ENCODE measurements at regions of chr6 and their contacts with region 1.

Region 1: GRCh38 chr6:137497721-137498463 is 3.7 kb upstream of the OLIG3 start:
- DNase-seq: peak in 3 of 35 experiments; percentile 13 to 19 (median 14)
- ATAC-seq: peak; percentile 47 to 64 (median 57)
- H3K4me3 ChIP-seq: peak overlapping the region; percentile 16 to 47
- H3K4me3 Mint-ChIP-seq: peak overlapping the region in 2 of 3 donors; percentile 44 to 60
- H3K27ac ChIP-seq: no peak overlapping the region
- H3K27ac Mint-ChIP-seq: peak overlapping the region in 1 of 2 donors; percentile 43
- H3K4me1 ChIP-seq: peaks cover 29 to 53% of the 10 kb centered on the region in 2 experiments
- H3K4me1 Mint-ChIP-seq: peaks cover 37 to 46% (median 41%) of the 10 kb centered on the region in 3 donors
- H3K27me3 ChIP-seq: peaks cover 40 to 58% of the 10 kb centered on the region in 2 experiments
- H3K27me3 Mint-ChIP-seq: peaks cover 65 to 75% of the 10 kb centered on the region in 2 donors

Region 2: GRCh38 chr6:137487181-137487868 is 10.6 kb before region 1 on chr6:
- CTCF ChIA-PET with region 1: interaction called in 1 of 2 experiments, 4 read pairs
- POLR2A ChIA-PET with region 1: interaction called in 1 of 2 experiments, 12 read pairs
- DNase-seq: no peak
- ATAC-seq: no peak
- H3K4me3 ChIP-seq: peak overlapping the region in 1 of 2 donors; percentile 5
- H3K4me3 Mint-ChIP-seq: peak overlapping the region in 1 of 3 donors; percentile 70
- H3K27ac ChIP-seq: no peak overlapping the region
- H3K27ac Mint-ChIP-seq: no peak overlapping the region
- H3K4me1 ChIP-seq: peaks cover 11 to 27% of the 10 kb centered on the region in 2 experiments
- H3K4me1 Mint-ChIP-seq: peaks cover 22 to 30% (median 30%) of the 10 kb centered on the region in 3 donors
- H3K27me3 ChIP-seq: peaks cover 46% of the 10 kb centered on the region in 2 experiments
- H3K27me3 Mint-ChIP-seq: peaks cover 68 to 77% of the 10 kb centered on the region in 2 donors

Region 3: GRCh38 chr6:137962725-137963124 is 464.8 kb after region 1 on chr6:
- CTCF ChIA-PET with region 1: interaction called in 1 of 2 experiments, 12 read pairs
- POLR2A ChIA-PET with region 1: no interaction called
- DNase-seq: no peak
- ATAC-seq: no peak
- H3K4me3 ChIP-seq: no peak overlapping the region
- H3K4me3 Mint-ChIP-seq: no peak overlapping the region
- H3K27ac ChIP-seq: no peak overlapping the region
- H3K27ac Mint-ChIP-seq: no peak overlapping the region
- H3K4me1 ChIP-seq: no peaks in the 10 kb centered on the region
- H3K4me1 Mint-ChIP-seq: peaks cover 2 to 9% (median 3%) of the 10 kb centered on the region in 3 donors
- H3K27me3 ChIP-seq: no peaks in the 10 kb centered on the region
- H3K27me3 Mint-ChIP-seq: no peaks in the 10 kb centered on the region

Measured in T-cell (primary cell).